CD8-positive, alpha-beta T cell (primary cell): ENCODE measurements at regions of chr16 and their contacts with region 1.

Region 1: GRCh38 chr16:81623363-81624102 is 155.6 kb upstream of the PLCG2 start:
- DNase-seq: peak; percentile 29 to 81 (median 68)
- ATAC-seq: peak; percentile 68
- H3K4me3 ChIP-seq: no peak overlapping the region
- H3K4me3 Mint-ChIP-seq: no peak overlapping the region
- H3K27ac ChIP-seq: no peak overlapping the region
- H3K27ac Mint-ChIP-seq: no peak overlapping the region
- H3K4me1 ChIP-seq: no peaks in the 10 kb centered on the region
- H3K4me1 Mint-ChIP-seq: peaks cover 4% of the 10 kb centered on the region
- H3K27me3 ChIP-seq: no peaks in the 10 kb centered on the region
- H3K27me3 Mint-ChIP-seq: no peaks in the 10 kb centered on the region
- CTCF ChIP-seq: peak; percentile 59

Region 2: DNA sequence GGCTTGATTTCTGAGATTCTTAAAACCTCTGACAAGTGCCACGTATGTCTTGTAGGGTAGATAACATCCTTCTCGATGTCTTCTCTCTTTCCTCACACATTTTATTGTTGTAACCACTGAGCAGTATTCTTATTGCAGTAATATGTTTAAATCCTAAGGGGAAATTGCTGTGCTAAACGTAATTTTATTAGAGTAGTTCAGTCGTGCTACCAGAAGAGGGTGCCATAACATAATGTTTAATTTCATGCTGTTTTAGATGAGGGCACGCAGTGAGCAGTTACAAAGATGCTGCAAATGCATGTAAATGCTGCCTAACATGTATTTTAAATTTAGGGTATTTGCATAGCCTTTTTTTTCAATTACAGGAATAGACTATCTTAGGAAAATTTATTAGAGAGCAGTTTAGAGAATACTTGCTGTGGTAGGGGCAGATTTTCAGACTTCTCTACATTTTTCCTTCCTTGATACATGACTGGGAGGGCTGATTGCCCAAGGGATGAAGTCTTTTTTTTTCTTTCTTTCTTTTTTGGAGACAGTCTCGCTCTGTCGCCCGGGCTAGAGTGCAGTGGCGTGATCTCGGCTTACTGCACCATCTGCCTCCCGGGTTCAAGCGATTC is 257.1 kb before region 1 on chr16:
- CTCF ChIA-PET with region 1: interaction called, 24 read pairs
- POLR2A ChIA-PET with region 1: no interaction called
- intact Hi-C with region 1: no loop called
- DNase-seq: peak in 3 of 9 experiments; percentile 18 to 72 (median 64)
- ATAC-seq: peak; percentile 83
- H3K4me3 ChIP-seq: no peak overlapping the region
- H3K4me3 Mint-ChIP-seq: no peak overlapping the region
- H3K27ac ChIP-seq: no peak overlapping the region
- H3K27ac Mint-ChIP-seq: no peak overlapping the region
- H3K4me1 ChIP-seq: no peaks in the 10 kb centered on the region
- H3K4me1 Mint-ChIP-seq: no peaks in the 10 kb centered on the region
- H3K27me3 ChIP-seq: no peaks in the 10 kb centered on the region
- H3K27me3 Mint-ChIP-seq: no peaks in the 10 kb centered on the region
- CTCF ChIP-seq: peak; percentile 85

Region 3: GRCh38 chr16:81600901-81601428 is 22.6 kb before region 1 on chr16:
- CTCF ChIA-PET with region 1: no interaction called
- POLR2A ChIA-PET with region 1: no interaction called
- intact Hi-C with region 1: no loop called
- DNase-seq: no peak
- ATAC-seq: no peak
- H3K4me3 ChIP-seq: no peak overlapping the region
- H3K4me3 Mint-ChIP-seq: no peak overlapping the region
- H3K27ac ChIP-seq: no peak overlapping the region
- H3K27ac Mint-ChIP-seq: no peak overlapping the region
- H3K4me1 ChIP-seq: no peaks in the 10 kb centered on the region
- H3K4me1 Mint-ChIP-seq: peaks cover 11% of the 10 kb centered on the region
- H3K27me3 ChIP-seq: no peaks in the 10 kb centered on the region
- H3K27me3 Mint-ChIP-seq: no peaks in the 10 kb centered on the region
- CTCF ChIP-seq: no peak

Region 4: DNA sequence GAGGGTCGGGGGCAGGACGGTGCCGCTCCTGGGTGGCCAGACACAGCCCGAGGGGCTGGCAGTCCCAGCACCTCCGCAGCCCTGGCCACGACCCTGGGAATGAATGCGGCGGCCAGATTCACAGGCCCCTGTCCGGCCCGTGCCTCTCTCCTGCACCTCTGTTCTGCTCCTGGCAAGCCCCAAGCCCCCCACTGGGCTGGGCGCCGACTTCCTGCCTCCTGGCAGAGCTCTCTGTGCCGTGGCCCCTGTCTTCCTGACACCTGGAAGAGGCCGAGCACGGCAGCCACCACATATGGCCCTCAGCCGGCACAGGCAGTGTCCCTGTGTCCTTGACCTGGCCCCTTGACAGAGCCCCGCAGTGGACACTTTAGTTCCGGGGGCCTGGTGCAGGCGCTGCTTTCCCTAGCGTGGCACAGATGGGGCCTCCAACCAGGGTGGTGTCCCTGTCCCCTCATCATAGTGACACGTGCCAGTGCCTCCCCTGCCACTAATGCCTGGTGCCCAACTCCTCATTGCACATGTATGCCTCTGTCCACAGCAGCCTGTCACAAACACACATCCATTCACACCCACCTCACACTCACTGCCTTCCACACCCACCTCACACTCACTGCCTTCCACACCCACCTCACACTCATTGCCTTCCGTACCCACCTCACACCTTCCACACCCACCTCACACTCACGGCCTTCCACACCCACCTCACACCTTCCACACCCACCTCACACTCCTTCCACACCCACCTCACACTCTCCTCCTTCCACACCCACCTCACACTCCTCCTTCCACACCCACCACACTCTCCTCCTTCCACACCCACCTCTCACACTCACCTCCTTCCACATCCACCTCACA is 44.9 kb after region 1 on chr16:
- CTCF ChIA-PET with region 1: no interaction called
- POLR2A ChIA-PET with region 1: no interaction called
- intact Hi-C with region 1: no loop called
- DNase-seq: peak in 1 of 9 experiments; percentile 23
- ATAC-seq: no peak
- H3K4me3 ChIP-seq: no peak overlapping the region
- H3K4me3 Mint-ChIP-seq: no peak overlapping the region
- H3K27ac ChIP-seq: peak overlapping the region in 1 of 2 experiments; percentile 73
- H3K27ac Mint-ChIP-seq: peak overlapping the region; percentile 37
- H3K4me1 ChIP-seq: no peaks in the 10 kb centered on the region
- H3K4me1 Mint-ChIP-seq: no peaks in the 10 kb centered on the region
- H3K27me3 ChIP-seq: no peaks in the 10 kb centered on the region
- H3K27me3 Mint-ChIP-seq: no peaks in the 10 kb centered on the region
- CTCF ChIP-seq: no peak

Region 5: GRCh38 chr16:81696961-81697615 is 73.6 kb after region 1 on chr16:
- CTCF ChIA-PET with region 1: interaction called, 15 read pairs
- POLR2A ChIA-PET with region 1: no interaction called
- intact Hi-C with region 1: loop called in 1 of 2 experiments (anchors 1 kb)
- DNase-seq: peak in 8 of 9 experiments; percentile 24 to 70 (median 48)
- ATAC-seq: peak; percentile 58
- H3K4me3 ChIP-seq: no peak overlapping the region
- H3K4me3 Mint-ChIP-seq: no peak overlapping the region
- H3K27ac ChIP-seq: no peak overlapping the region
- H3K27ac Mint-ChIP-seq: peak overlapping the region; percentile 27
- H3K4me1 ChIP-seq: no peaks in the 10 kb centered on the region
- H3K4me1 Mint-ChIP-seq: no peaks in the 10 kb centered on the region
- H3K27me3 ChIP-seq: no peaks in the 10 kb centered on the region
- H3K27me3 Mint-ChIP-seq: no peaks in the 10 kb centered on the region
- CTCF ChIP-seq: peak; percentile 35

Region 6: DNA sequence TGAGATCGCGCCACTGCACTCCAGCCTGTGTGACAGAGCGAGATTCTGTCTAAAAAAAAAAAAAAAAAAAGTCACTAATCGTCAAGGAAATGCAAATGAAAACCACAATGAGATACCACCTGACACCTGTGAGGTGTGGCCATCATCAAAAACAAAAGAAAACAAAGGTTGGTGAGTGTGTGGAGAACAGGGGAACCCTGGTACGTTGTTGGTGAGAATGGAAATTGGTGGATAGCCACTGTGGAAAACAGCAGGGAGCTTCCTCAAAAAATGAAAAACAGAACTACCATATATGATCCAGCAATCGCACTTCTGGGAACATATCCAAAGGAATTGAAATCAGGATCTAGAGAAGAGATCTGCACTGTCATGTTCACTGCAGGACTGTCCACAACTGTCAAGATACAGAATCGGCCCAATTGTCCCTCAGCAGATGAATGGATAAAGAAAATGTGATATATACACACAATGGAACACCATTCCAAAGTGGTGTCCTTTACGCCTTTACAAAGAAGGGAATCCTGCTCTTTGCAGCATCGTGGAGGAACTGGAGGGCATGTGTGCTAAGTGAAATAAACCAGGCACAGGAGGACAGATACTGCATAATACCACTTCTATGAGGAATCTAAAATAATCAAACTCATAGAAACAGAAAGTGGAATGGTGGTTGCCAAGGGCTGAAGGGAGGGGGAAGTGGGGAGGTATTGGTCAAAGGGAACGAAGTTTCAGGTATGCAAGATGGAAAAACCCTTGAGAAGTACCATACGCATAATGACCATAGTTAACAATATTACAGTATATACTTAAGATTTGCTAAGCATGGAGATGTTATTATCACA is 92.0 kb after region 1 on chr16:
- CTCF ChIA-PET with region 1: interaction called, 15 read pairs
- POLR2A ChIA-PET with region 1: no interaction called
- intact Hi-C with region 1: no loop called
- DNase-seq: peak in 6 of 9 experiments; percentile 11 to 84 (median 42)
- ATAC-seq: peak; percentile 61
- H3K4me3 ChIP-seq: peak overlapping the region; percentile 8 to 26
- H3K4me3 Mint-ChIP-seq: peak overlapping the region; percentile 71
- H3K27ac ChIP-seq: peak overlapping the region in 1 of 2 experiments; percentile 70
- H3K27ac Mint-ChIP-seq: peak overlapping the region; percentile 92
- H3K4me1 ChIP-seq: peaks cover 28% of the 10 kb centered on the region
- H3K4me1 Mint-ChIP-seq: peaks cover 47% of the 10 kb centered on the region
- H3K27me3 ChIP-seq: no peaks in the 10 kb centered on the region
- H3K27me3 Mint-ChIP-seq: no peaks in the 10 kb centered on the region
- CTCF ChIP-seq: no peak

Region 7: DNA sequence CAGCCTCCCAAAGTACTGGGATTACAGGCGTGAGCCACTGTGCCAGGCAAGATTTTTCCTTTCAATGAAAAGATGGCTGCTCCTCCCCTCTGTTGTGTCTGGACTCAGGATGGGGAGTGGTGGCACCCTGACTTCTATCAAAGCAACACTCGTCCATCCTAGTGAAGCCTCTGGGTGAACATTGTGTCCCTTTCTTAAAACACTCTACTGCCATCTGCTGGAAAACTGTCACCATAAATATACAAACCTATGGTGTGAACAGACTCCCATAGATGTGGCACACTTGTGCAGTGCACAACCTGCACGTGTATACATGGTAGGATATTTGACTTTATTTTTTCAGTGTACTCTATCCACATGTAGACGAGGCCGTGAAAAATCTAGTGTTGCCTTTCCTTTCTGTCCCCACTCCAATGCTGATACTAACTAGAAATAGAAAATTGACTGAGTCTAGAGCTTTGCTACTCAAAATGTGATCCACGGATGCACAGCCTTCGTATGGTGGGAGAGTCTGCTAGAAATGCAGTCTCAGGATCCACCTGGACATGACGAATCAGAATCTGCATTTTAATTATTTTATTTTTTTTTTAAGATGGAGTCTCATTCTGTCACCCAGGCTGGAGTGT is 99.7 kb after region 1 on chr16:
- CTCF ChIA-PET with region 1: interaction called, 55 read pairs
- POLR2A ChIA-PET with region 1: no interaction called
- intact Hi-C with region 1: loop called (anchors 1 kb)
- DNase-seq: peak in 6 of 9 experiments; percentile 27 to 87 (median 58)
- ATAC-seq: peak; percentile 68
- H3K4me3 ChIP-seq: no peak overlapping the region
- H3K4me3 Mint-ChIP-seq: no peak overlapping the region
- H3K27ac ChIP-seq: no peak overlapping the region
- H3K27ac Mint-ChIP-seq: no peak overlapping the region
- H3K4me1 ChIP-seq: peaks cover 6% of the 10 kb centered on the region
- H3K4me1 Mint-ChIP-seq: peaks cover 15% of the 10 kb centered on the region
- H3K27me3 ChIP-seq: no peaks in the 10 kb centered on the region
- H3K27me3 Mint-ChIP-seq: no peaks in the 10 kb centered on the region
- CTCF ChIP-seq: peak; percentile 76

Region 8: GRCh38 chr16:81817789-81818567 is 194.4 kb after region 1 on chr16:
- CTCF ChIA-PET with region 1: no interaction called
- POLR2A ChIA-PET with region 1: no interaction called
- intact Hi-C with region 1: no loop called
- DNase-seq: peak in 5 of 9 experiments; percentile 29 to 83 (median 52)
- ATAC-seq: peak; percentile 61
- H3K4me3 ChIP-seq: no peak overlapping the region
- H3K4me3 Mint-ChIP-seq: peak overlapping the region; percentile 23
- H3K27ac ChIP-seq: peak overlapping the region; percentile 60 to 94
- H3K27ac Mint-ChIP-seq: peak overlapping the region; percentile 60
- H3K4me1 ChIP-seq: peaks cover 7% of the 10 kb centered on the region
- H3K4me1 Mint-ChIP-seq: peaks cover 25% of the 10 kb centered on the region
- H3K27me3 ChIP-seq: no peaks in the 10 kb centered on the region
- H3K27me3 Mint-ChIP-seq: no peaks in the 10 kb centered on the region
- CTCF ChIP-seq: no peak

Region 9: GRCh38 chr16:81873843-81874752 is 250.6 kb after region 1 on chr16:
- CTCF ChIA-PET with region 1: interaction called, 3 read pairs
- POLR2A ChIA-PET with region 1: no interaction called
- intact Hi-C with region 1: loop called in 1 of 2 experiments (anchors 2 kb)
- DNase-seq: peak; percentile 6 to 76 (median 48)
- ATAC-seq: peak; percentile 74
- H3K4me3 ChIP-seq: no peak overlapping the region
- H3K4me3 Mint-ChIP-seq: no peak overlapping the region
- H3K27ac ChIP-seq: no peak overlapping the region
- H3K27ac Mint-ChIP-seq: no peak overlapping the region
- H3K4me1 ChIP-seq: no peaks in the 10 kb centered on the region
- H3K4me1 Mint-ChIP-seq: peaks cover 15% of the 10 kb centered on the region
- H3K27me3 ChIP-seq: no peaks in the 10 kb centered on the region
- H3K27me3 Mint-ChIP-seq: no peaks in the 10 kb centered on the region
- CTCF ChIP-seq: peak; percentile 81